ENCODE measurements at regions of chr1 and their contacts with region 1.

Region 1: DNA sequence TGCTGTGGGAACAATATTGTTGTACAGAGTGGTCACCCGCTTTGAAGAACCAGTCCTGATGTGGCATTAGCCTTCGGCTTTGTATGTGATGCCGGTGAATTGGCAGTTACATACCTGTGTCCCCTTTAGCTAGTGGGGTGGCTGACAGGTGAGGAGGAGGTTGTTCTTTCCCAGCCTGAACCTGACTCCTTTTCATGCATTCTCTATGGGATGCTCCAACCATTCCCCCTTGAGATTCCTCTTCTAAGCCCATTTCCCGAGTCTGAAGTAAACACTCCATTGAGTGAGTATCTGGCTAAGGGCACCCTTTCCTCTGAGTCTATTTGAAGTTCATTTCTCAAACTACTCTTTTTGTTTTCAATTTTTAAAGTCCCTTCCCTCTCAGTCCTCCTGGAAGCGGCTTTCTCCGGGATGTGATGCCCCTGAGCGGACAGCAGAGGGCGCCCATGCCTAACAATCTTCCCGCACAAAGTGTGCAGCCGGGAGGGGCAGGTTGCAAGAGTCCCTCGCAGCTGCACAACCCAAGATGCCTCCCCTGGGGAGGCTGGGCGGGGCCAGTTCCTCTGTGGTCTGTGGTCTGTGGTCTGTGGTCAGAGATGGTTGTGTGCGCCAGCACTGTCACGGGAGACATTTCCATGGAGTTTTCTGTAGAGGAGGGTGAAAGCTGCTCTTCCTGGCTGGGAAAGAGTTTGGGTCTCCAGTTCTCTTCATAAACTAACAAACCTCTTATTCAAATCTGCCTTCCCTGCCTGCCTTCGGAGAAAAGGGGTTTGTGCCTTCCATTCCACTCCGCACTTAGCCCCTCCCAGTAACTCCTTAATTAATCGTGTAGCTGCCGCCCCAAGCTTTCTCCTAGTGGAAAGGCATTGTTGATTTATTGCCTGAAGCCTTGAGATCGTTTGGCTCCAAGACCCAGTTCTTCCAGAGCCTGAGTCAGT is 36.4 kb upstream of the LMX1A start:
- DNase-seq: peak; percentile 86
- CTCF ChIP-seq: peak; percentile 89

Region 2: GRCh38 chr1:165119086-165119485 is 273.8 kb before region 1 on chr1:
- CTCF ChIA-PET with region 1: no interaction called
- POLR2A ChIA-PET with region 1: no interaction called
- DNase-seq: no peak
- CTCF ChIP-seq: no peak

Region 3: DNA sequence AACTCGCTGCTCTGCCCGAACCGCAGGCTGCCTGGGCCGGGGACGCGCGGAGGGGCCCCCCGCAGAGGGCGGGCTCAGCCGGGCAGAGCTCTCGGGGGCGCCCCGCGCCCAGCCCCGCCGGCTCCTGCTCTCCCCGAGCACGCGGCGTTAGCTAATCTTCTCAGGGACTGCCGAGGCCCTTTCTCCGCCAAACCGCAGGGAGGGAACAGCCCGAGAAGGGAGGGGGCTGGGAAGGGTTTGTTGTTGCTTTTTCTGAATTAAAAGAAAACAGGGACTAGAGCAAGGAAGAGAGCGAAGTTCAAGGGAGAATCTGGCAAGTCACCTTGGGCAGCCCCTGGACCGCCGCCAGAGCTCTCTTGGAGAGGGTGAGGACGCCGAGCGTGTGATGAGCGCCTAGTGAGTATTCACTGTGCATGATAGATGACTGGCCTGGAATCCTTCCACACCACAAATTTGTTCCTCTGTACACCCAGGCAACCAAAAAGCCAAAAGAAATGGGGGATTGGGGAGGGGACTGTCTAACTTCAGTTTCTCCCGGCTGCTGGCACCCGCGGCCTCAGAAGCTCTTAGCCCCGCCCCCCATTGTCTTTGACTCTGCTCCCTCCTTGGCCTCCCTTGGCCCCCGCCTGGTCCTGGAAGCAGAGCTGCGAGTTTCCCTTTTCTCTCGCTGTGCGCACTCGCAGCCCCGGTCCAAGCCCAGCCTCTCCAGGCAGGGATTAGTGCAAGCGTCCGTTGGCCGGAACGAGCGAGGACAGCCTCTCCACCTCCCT is 16.7 kb before region 1 on chr1:
- CTCF ChIA-PET with region 1: interaction called, 40 read pairs
- POLR2A ChIA-PET with region 1: no interaction called
- DNase-seq: no peak
- CTCF ChIP-seq: no peak

Region 4: GRCh38 chr1:165403835-165404482 is 11.1 kb after region 1 on chr1:
- CTCF ChIA-PET with region 1: interaction called, 16 read pairs
- POLR2A ChIA-PET with region 1: no interaction called
- DNase-seq: peak; percentile 46
- CTCF ChIP-seq: peak; percentile 50

Region 5: GRCh38 chr1:165420655-165421054 is 27.8 kb after region 1 on chr1:
- CTCF ChIA-PET with region 1: no interaction called
- POLR2A ChIA-PET with region 1: no interaction called
- DNase-seq: no peak
- CTCF ChIP-seq: no peak

Region 6: GRCh38 chr1:165586435-165586834 is 193.5 kb after region 1 on chr1:
- CTCF ChIA-PET with region 1: interaction called, 120 read pairs
- POLR2A ChIA-PET with region 1: no interaction called
- DNase-seq: no peak
- CTCF ChIP-seq: no peak